ENCODE measurements at regions of chr12 and their contacts with region 1.

Region 1: GRCh38 chr12:949453-950191 is at the start of gene RAD52:
- DNase-seq: peak; percentile 96 to 99 (median 97)
- H3K4me3 ChIP-seq: peak within 1 kb of the TSS; percentile 48 to 94 (median 72)
- H3K27ac ChIP-seq: peak within 1 kb of the TSS; percentile 75 to 90 (median 87)
- H3K4me1 ChIP-seq: peaks cover 0 to 16% of the 10 kb centered on the region in 2 donors
- H3K27me3 ChIP-seq: no peaks in the 10 kb centered on the region
- CTCF ChIP-seq: peak; percentile 96 to 100 (median 99)
- POLR2A ChIP-seq: peak; percentile 74 to 85
- total RNA-seq, gene RAD52: 5.5 to 22.6 (median 10.7) TPM

Region 2: GRCh38 chr12:823028-823698 is 126.5 kb before region 1 on chr12:
- intact Hi-C with region 1: loop called in 1 of 2 experiments (anchors 10 kb)
- DNase-seq: no peak
- H3K4me3 ChIP-seq: no peak overlapping the region
- H3K27ac ChIP-seq: no peak overlapping the region
- H3K4me1 ChIP-seq: peaks cover 0 to 12% of the 10 kb centered on the region in 2 donors
- H3K27me3 ChIP-seq: no peaks in the 10 kb centered on the region
- CTCF ChIP-seq: no peak
- POLR2A ChIP-seq: no peak

Region 3: GRCh38 chr12:835754-836518 is 113.7 kb before region 1 on chr12:
- intact Hi-C with region 1: loop called in 1 of 2 experiments (anchors 10 kb)
- DNase-seq: no peak
- H3K4me3 ChIP-seq: no peak overlapping the region
- H3K27ac ChIP-seq: no peak overlapping the region
- H3K4me1 ChIP-seq: peaks cover 4% of the 10 kb centered on the region in 2 donors
- H3K27me3 ChIP-seq: no peaks in the 10 kb centered on the region
- CTCF ChIP-seq: no peak
- POLR2A ChIP-seq: no peak

Region 4: GRCh38 chr12:1003600-1004271 is 54.1 kb after region 1 on chr12:
- intact Hi-C with region 1: no loop called
- DNase-seq: no peak
- H3K4me3 ChIP-seq: no peak overlapping the region
- H3K27ac ChIP-seq: peak overlapping the region in 3 of 5 donors; percentile 19 to 72 (median 39)
- H3K4me1 ChIP-seq: peaks cover 9 to 16% of the 10 kb centered on the region in 2 donors
- H3K27me3 ChIP-seq: no peaks in the 10 kb centered on the region
- CTCF ChIP-seq: no peak
- POLR2A ChIP-seq: no peak